Dorsolateral prefrontal cortex (tissue), 120 donors: ENCODE measurements at regions of chr19 and their contacts with region 1.

Region 1: GRCh38 chr19:52139252-52140031 is at the start of gene ZNF616:
- DNase-seq: peak; percentile 86 to 98 (median 94)
- H3K4me3 ChIP-seq: peak within 1 kb of the TSS; percentile 49 to 99 (median 86)
- H3K27ac ChIP-seq: peak within 1 kb of the TSS; percentile 46 to 96 (median 88)
- H3K27me3 ChIP-seq: no peaks in the 10 kb centered on the region
- CTCF ChIP-seq: peak; percentile 38 to 87 (median 76)
- total RNA-seq, gene ZNF616: 4.5 to 18.3 (median 10.6) TPM

Region 2: DNA sequence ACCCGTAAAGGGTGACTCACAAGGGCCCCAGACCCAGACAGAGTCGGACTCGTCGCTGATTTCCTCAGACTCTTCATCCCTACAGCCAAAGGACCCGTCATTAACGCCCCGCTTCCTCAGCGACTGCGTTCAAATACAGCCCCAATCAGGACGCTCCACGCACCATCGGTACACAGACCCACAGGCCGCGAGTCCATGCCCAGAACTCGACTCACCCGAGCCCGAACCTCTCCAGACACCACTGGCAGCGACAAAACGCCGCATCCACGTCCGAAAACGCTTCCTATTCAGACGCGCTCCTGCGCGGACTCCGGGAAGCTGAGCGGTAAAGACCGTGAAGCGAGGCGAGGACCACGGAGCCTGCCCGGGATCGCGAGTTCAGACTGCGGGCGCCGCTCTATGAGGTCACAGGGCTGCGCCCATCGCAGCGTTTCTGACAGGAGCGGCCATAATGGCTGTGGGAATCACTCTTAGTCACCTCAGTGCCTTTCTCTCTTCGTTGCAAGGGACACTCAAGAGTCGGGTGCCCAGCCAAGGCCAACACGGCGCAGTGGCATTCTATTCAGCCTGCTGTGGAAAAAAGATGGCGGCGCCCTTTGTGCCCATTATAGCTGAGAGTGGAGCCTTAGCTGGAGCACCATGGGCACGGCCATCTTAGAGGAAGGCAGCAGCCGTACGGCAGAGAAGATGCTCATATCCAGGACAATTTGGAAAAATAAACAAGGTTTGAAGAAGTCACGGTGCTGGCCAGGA is 111.2 kb before region 1 on chr19 and contains the start of gene ZNF614:
- intact Hi-C with region 1: no loop called
- DNase-seq: peak; percentile 83 to 93 (median 90)
- H3K4me3 ChIP-seq: peak within 1 kb of the TSS; percentile 58 to 98 (median 86)
- H3K27ac ChIP-seq: peak within 1 kb of the TSS; percentile 83 to 99 (median 95)
- H3K27me3 ChIP-seq: no peaks in the 10 kb centered on the region
- CTCF ChIP-seq: peak in 14 of 56 donors; percentile 7 to 40 (median 18)
- total RNA-seq, gene ZNF614: 7.1 to 15.2 (median 9.7) TPM

Region 3: DNA sequence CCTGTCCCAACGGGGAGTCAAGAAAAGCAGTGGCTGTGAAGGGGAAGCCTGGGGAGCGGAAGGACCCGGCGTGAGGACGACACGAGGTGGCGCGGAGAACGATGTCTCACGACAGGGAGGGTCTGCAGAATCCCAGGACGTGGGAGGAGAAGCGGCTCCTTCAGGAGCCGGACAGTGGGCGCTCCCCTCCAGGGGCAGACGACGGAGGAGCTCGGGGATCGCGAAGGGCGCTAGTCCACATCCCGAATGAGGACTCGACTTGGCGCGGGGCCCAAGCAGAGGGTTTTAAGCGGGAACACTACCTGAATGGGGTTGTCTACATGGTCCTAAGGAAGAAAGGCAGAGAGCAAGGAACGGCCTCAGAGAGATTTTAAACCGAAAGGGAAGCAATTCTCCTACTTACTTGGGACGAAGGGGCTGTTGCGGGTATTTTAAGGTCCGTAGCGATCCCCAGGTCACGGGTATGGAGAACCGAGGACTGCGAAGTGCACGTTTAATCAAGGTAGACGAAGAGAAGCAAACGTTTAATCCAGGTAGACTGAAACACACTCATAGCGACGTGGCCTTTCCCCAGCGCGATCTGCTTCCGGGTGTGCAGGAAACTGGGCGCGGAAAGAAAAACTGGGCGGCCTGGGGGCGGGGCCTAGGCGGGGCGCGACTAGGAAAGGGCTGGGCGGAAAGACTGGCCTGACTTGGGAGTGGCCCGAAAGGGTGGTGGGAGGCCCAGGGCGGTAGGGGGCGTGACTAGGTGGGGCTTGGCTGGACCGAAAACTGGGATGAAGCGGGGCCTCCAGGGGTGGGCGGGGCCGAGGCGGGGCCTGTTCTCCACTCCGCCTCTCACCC is 44.0 kb before region 1 on chr19 and contains the start of gene ZNF841:
- intact Hi-C with region 1: loop called in 1 of 2 experiments (anchors 2 kb)
- DNase-seq: peak; percentile 83 to 96 (median 92)
- H3K4me3 ChIP-seq: peak within 1 kb of the TSS; percentile 58 to 99 (median 87)
- H3K27ac ChIP-seq: peak within 1 kb of the TSS in 38 of 59 donors; percentile 5 to 77 (median 48)
- H3K27me3 ChIP-seq: no peaks in the 10 kb centered on the region
- CTCF ChIP-seq: peak in 39 of 56 donors; percentile 8 to 57 (median 24)
- total RNA-seq, gene ZNF841: 19.5 to 42.8 (median 30.5) TPM

Region 4: GRCh38 chr19:52189735-52190486 is 50.5 kb after region 1 on chr19 and contains the start of gene PPP2R1A:
- intact Hi-C with region 1: loop called (anchors 1 to 2 kb)
- DNase-seq: peak; percentile 98 to 100 (median 100)
- H3K4me3 ChIP-seq: peak within 1 kb of the TSS; percentile 57 to 98 (median 87)
- H3K27ac ChIP-seq: peak within 1 kb of the TSS; percentile 88 to 100 (median 98)
- H3K27me3 ChIP-seq: no peaks in the 10 kb centered on the region
- CTCF ChIP-seq: peak in 11 of 56 donors; percentile 3 to 42 (median 11)
- total RNA-seq, gene PPP2R1A: 220 to 524 (median 400) TPM

Region 5: GRCh38 chr19:52237771-52238400 is 98.4 kb after region 1 on chr19:
- intact Hi-C with region 1: loop called (anchors 1 to 2 kb)
- DNase-seq: peak in 9 of 10 donors; percentile 26 to 70 (median 55)
- H3K4me3 ChIP-seq: peak overlapping the region in 2 of 59 donors; percentile 1 to 20
- H3K27ac ChIP-seq: no peak overlapping the region
- H3K27me3 ChIP-seq: no peaks in the 10 kb centered on the region
- CTCF ChIP-seq: peak; percentile 82 to 98 (median 92)

Region 6: GRCh38 chr19:52269338-52270261 is 130.2 kb after region 1 on chr19 and contains the start of gene ZNF766:
- intact Hi-C with region 1: loop called in 1 of 2 experiments (anchors 1 kb)
- DNase-seq: peak; percentile 93 to 98 (median 96)
- H3K4me3 ChIP-seq: peak within 1 kb of the TSS; percentile 70 to 100 (median 95)
- H3K27ac ChIP-seq: peak within 1 kb of the TSS in 58 of 59 donors; percentile 25 to 96 (median 84)
- H3K27me3 ChIP-seq: no peaks in the 10 kb centered on the region
- CTCF ChIP-seq: peak in 30 of 56 donors; percentile 5 to 52 (median 26)
- total RNA-seq, gene ZNF766: 10.8 to 24.9 (median 15.6) TPM